ENCODE measurements at regions of chr9 and their contacts with region 1.

Region 1: GRCh38 chr9:2676466-2676865 is 40.8 kb upstream of the KCNV2 start:
- DNase-seq: peak in 1 of 10 donors; percentile 8
- H3K4me3 ChIP-seq: no peak overlapping the region
- H3K27ac ChIP-seq: no peak overlapping the region
- H3K27me3 ChIP-seq: no peaks in the 10 kb centered on the region
- CTCF ChIP-seq: no peak

Region 2: GRCh38 chr9:2336055-2336454 is 340.4 kb before region 1 on chr9:
- intact Hi-C with region 1: loop called in 1 of 2 experiments (anchors 10 kb)
- DNase-seq: no peak
- H3K4me3 ChIP-seq: no peak overlapping the region
- H3K27ac ChIP-seq: no peak overlapping the region
- H3K27me3 ChIP-seq: no peaks in the 10 kb centered on the region
- CTCF ChIP-seq: peak in 36 of 56 donors; percentile 7 to 49 (median 26)

Measured in dorsolateral prefrontal cortex (tissue), 120 donors.